MCF 10A (cell line): ENCODE measurements at regions of chrX and their contacts with region 1.

Region 1: GRCh38 chrX:8743126-8743732 is 11.3 kb upstream of the ANOS1 start:
- DNase-seq: peak; percentile 72
- H3K4me3 Mint-ChIP-seq: no peak overlapping the region
- H3K27ac Mint-ChIP-seq: no peak overlapping the region
- H3K4me1 Mint-ChIP-seq: no peaks in the 10 kb centered on the region
- H3K27me3 Mint-ChIP-seq: no peaks in the 10 kb centered on the region
- CTCF ChIP-seq: peak; percentile 64

Region 2: GRCh38 chrX:7996414-7996813 is 746.8 kb before region 1 on chrX:
- CTCF ChIA-PET with region 1: interaction called, 10 read pairs
- POLR2A ChIA-PET with region 1: no interaction called
- intact Hi-C with region 1: loop called (anchors 1 kb)
- DNase-seq: peak; percentile 57
- H3K4me3 Mint-ChIP-seq: no peak overlapping the region
- H3K27ac Mint-ChIP-seq: no peak overlapping the region
- H3K4me1 Mint-ChIP-seq: no peaks in the 10 kb centered on the region
- H3K27me3 Mint-ChIP-seq: no peaks in the 10 kb centered on the region
- CTCF ChIP-seq: peak; percentile 41

Region 3: DNA sequence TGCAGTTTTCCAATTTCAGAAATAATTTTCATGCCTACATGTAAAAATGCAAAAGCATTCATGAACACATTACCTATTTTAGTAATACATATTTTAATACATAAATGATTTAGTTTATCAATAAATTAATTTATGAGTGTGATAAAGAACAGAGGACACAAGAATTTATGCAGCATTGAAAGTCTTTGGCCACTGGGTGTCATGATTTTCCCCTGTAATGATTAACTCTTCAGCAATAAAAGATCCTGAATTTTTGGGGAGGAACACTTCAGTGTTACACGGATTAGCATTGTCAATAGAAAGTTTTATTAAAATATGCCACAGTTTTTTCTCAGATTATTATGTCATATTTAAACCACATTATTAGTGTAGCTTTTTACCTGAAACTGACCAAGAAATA is 563.6 kb before region 1 on chrX:
- CTCF ChIA-PET with region 1: interaction called, 9 read pairs
- POLR2A ChIA-PET with region 1: no interaction called
- intact Hi-C with region 1: loop called (anchors 2 kb)
- DNase-seq: peak; percentile 14
- H3K4me3 Mint-ChIP-seq: no peak overlapping the region
- H3K27ac Mint-ChIP-seq: no peak overlapping the region
- H3K4me1 Mint-ChIP-seq: no peaks in the 10 kb centered on the region
- H3K27me3 Mint-ChIP-seq: no peaks in the 10 kb centered on the region
- CTCF ChIP-seq: peak; percentile 18

Region 4: GRCh38 chrX:8323356-8323755 is 419.9 kb before region 1 on chrX:
- CTCF ChIA-PET with region 1: no interaction called
- POLR2A ChIA-PET with region 1: no interaction called
- intact Hi-C with region 1: loop called (anchors 1 kb)
- DNase-seq: peak; percentile 30
- H3K4me3 Mint-ChIP-seq: no peak overlapping the region
- H3K27ac Mint-ChIP-seq: no peak overlapping the region
- H3K4me1 Mint-ChIP-seq: no peaks in the 10 kb centered on the region
- H3K27me3 Mint-ChIP-seq: no peaks in the 10 kb centered on the region
- CTCF ChIP-seq: peak; percentile 13

Region 5: GRCh38 chrX:8364369-8365141 is 378.7 kb before region 1 on chrX:
- CTCF ChIA-PET with region 1: interaction called, 7 read pairs
- POLR2A ChIA-PET with region 1: no interaction called
- intact Hi-C with region 1: loop called (anchors 1 kb)
- DNase-seq: peak; percentile 39
- H3K4me3 Mint-ChIP-seq: no peak overlapping the region
- H3K27ac Mint-ChIP-seq: no peak overlapping the region
- H3K4me1 Mint-ChIP-seq: no peaks in the 10 kb centered on the region
- H3K27me3 Mint-ChIP-seq: no peaks in the 10 kb centered on the region
- CTCF ChIP-seq: peak; percentile 29

Region 6: DNA sequence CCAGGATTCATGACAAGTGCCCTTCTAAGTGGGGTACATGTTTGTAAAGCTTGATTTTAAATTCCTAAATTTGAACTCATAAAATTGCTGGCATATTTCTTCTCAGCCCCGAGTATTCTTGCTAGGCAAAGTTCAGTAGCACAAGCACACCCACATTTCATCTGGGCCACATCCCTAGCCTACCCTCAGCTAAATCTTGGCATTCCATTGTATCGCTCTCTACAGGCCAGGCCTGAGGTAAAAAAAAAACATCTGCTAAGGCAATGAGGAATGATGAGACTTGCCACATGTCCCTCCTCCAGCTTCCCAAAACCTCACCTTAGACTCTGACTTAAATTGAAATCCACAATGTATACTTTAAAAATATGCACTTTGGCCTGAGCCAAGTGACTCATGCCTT is 329.9 kb before region 1 on chrX:
- CTCF ChIA-PET with region 1: no interaction called
- POLR2A ChIA-PET with region 1: no interaction called
- intact Hi-C with region 1: no loop called
- DNase-seq: no peak
- H3K4me3 Mint-ChIP-seq: no peak overlapping the region
- H3K27ac Mint-ChIP-seq: no peak overlapping the region
- H3K4me1 Mint-ChIP-seq: no peaks in the 10 kb centered on the region
- H3K27me3 Mint-ChIP-seq: no peaks in the 10 kb centered on the region
- CTCF ChIP-seq: no peak

Region 7: GRCh38 chrX:8714164-8714563 is 29.1 kb before region 1 on chrX:
- CTCF ChIA-PET with region 1: no interaction called
- POLR2A ChIA-PET with region 1: no interaction called
- intact Hi-C with region 1: no loop called
- DNase-seq: no peak
- H3K4me3 Mint-ChIP-seq: no peak overlapping the region
- H3K27ac Mint-ChIP-seq: no peak overlapping the region
- H3K4me1 Mint-ChIP-seq: no peaks in the 10 kb centered on the region
- H3K27me3 Mint-ChIP-seq: no peaks in the 10 kb centered on the region
- CTCF ChIP-seq: no peak

Region 8: GRCh38 chrX:8815464-8816065 is 72.3 kb after region 1 on chrX:
- CTCF ChIA-PET with region 1: interaction called, 20 read pairs
- POLR2A ChIA-PET with region 1: no interaction called
- intact Hi-C with region 1: no loop called
- DNase-seq: peak; percentile 71
- H3K4me3 Mint-ChIP-seq: no peak overlapping the region
- H3K27ac Mint-ChIP-seq: no peak overlapping the region
- H3K4me1 Mint-ChIP-seq: no peaks in the 10 kb centered on the region
- H3K27me3 Mint-ChIP-seq: peaks cover 16% of the 10 kb centered on the region
- CTCF ChIP-seq: peak; percentile 59

Region 9: DNA sequence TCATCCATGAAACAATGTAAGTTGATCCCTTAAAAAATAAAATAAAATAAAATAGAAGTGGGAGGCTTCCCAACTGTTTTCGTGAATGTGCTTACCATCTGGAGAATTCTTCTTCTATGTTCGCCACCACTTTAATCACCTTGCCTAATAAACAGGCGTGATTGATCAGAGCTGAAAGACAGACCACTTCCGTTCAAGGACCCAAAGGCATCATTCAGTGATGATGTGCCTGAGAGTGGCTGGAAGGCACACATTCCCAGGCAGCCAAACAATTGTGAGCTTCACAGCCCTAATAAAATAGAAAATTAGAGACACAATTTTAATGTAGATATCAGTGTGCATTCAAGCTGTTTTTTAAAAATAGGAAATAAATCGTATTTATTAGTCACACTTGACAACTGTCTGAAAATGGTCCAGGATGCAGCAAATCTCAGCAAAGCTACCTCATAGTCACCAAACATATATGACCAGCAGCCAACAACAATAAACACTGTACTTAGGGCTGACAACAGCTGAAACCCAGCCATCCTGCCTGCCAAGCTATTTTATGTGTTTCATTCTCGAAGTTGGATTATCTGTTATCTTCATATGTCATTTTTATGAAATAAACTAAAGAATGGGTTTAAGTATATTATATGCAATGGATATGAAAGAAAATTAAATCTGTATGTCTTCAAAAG is 453.9 kb after region 1 on chrX:
- CTCF ChIA-PET with region 1: no interaction called
- POLR2A ChIA-PET with region 1: no interaction called
- intact Hi-C with region 1: no loop called
- DNase-seq: peak; percentile 34
- H3K4me3 Mint-ChIP-seq: no peak overlapping the region
- H3K27ac Mint-ChIP-seq: no peak overlapping the region
- H3K4me1 Mint-ChIP-seq: no peaks in the 10 kb centered on the region
- H3K27me3 Mint-ChIP-seq: no peaks in the 10 kb centered on the region
- CTCF ChIP-seq: no peak